Common myeloid progenitor, CD34-positive (primary cell): ENCODE measurements at regions of chr22 and their contacts with region 1.

Region 1: DNA sequence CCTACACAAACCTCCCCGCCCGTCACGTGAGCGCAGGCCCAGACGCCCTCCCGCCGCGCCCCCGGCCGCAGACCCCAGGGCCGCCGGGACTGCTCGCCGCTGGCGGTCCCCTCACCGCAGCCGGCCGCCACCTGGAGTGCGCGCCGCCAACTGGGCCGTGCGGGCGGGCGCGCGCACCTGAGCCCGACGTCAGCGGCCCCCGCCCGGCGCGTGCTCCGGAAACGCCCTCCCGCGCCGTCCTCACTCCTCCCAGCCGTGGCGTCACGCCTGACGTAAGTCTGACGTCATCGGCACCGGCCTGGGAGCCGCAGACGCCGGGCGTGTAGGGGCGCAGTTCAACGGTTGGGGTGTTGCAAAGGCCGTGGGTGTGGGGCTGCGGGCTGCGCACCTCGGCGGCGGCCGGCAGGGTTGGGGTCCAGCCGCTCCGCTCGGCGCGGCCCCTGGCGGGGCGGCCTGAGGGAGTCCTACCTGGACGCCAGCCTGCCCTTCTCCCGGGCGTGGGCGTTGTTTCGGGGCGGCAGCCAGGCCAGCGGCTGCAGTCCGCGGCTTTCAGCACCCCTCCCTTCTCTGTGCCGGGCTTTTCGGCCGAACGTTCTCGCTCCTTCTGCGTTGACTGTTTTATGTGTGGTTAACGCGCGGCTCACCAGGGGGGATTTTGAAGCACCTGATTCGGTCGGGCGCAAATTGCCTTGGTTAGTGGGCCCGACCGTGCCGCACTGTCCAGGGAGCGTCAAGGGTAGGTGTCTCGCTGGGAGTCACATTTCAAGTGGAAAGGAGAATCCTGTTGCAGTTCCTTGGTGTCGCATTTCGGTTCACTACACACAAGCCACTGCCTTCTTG is at the start of gene JOSD1:
- DNase-seq: peak; percentile 97 to 98 (median 98)
- H3K4me3 ChIP-seq: peak within 1 kb of the TSS; percentile 56 to 91 (median 88)
- H3K27ac ChIP-seq: peak within 1 kb of the TSS; percentile 86 to 94
- H3K4me1 ChIP-seq: peaks cover 16 to 56% (median 51%) of the 10 kb centered on the region in 4 experiments
- H3K27me3 ChIP-seq: no peaks in the 10 kb centered on the region

Region 2: GRCh38 chr22:38631724-38632123 is 69.3 kb before region 1 on chr22:
- CTCF ChIA-PET with region 1: no interaction called
- POLR2A ChIA-PET with region 1: no interaction called
- DNase-seq: no peak
- H3K4me3 ChIP-seq: no peak overlapping the region
- H3K27ac ChIP-seq: no peak overlapping the region
- H3K4me1 ChIP-seq: peaks cover 0 to 7% (median 2%) of the 10 kb centered on the region in 4 experiments
- H3K27me3 ChIP-seq: no peaks in the 10 kb centered on the region

Region 3: DNA sequence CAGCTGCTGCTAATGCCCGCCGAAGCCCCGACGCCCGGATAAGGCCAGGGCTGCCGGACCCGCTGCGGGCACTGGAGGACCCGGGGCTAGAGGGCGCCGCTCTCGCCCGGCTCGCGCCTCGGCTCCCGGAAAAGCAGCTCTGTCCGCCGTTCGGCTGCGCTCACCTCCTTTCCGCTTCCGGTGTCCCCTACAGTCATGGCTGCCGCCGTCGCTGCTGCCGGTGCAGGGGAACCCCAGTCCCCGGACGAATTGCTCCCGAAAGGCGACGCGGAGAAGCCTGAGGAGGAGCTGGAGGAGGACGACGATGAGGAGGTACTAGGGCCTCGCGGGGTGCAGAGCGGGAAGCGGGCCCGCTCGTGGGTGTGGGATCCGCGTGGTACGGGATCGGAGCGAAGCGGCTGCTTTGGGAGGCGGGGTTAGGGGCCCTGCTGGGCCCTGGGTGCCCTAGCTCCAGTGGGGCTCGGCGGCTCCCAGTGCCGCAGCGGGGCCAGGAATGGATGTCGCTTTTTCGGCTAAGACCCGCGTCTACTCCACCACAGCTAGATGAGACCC is 19.1 kb before region 1 on chr22 and contains the start of gene TOMM22:
- CTCF ChIA-PET with region 1: interaction called, 40 read pairs
- POLR2A ChIA-PET with region 1: interaction called, 7 read pairs
- DNase-seq: peak; percentile 79 to 87 (median 84)
- H3K4me3 ChIP-seq: peak within 1 kb of the TSS; percentile 84 to 99 (median 98)
- H3K27ac ChIP-seq: peak within 1 kb of the TSS; percentile 68 to 86
- H3K4me1 ChIP-seq: peaks cover 6 to 13% (median 10%) of the 10 kb centered on the region in 4 experiments
- H3K27me3 ChIP-seq: no peaks in the 10 kb centered on the region

Region 4: DNA sequence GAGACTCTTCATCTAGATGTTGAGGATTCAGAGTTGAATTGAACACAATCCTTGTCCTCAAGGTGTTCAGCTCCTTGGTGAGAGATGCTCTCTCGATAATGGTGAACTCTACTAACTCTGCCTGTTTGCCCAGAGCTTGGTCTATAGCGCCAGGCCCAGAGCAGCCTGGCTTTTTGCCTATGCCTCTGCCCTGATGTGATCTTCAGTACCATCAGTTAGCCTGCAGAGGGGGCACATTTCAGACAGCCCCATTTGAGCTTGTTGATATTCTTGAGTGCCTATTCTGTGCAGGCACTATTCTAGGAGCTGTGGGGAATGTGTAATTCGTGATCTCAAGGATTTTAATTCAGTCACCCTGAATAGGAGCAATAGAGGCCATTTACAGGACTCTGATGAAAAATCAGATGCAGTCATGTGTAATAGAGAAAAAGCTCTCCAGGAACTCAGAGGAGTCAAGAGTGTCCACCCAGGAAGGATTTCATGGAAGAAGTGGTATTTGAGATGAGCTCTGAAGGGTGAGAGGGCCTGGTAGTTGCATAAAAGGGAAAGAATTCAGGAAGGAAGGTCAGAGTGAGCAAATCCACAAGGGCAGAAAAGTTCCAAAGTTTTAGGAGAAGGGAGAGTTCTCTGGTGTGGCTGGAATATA is 24.0 kb after region 1 on chr22:
- CTCF ChIA-PET with region 1: interaction called, 16 read pairs
- POLR2A ChIA-PET with region 1: interaction called, 3 read pairs
- DNase-seq: peak; percentile 52 to 78 (median 71)
- H3K4me3 ChIP-seq: no peak overlapping the region
- H3K27ac ChIP-seq: no peak overlapping the region
- H3K4me1 ChIP-seq: no peaks in the 10 kb centered on the region
- H3K27me3 ChIP-seq: no peaks in the 10 kb centered on the region